Posterior cingulate gyrus (tissue), 11 donors: ENCODE measurements at regions of chr6 and their contacts with region 1.

Region 1: DNA sequence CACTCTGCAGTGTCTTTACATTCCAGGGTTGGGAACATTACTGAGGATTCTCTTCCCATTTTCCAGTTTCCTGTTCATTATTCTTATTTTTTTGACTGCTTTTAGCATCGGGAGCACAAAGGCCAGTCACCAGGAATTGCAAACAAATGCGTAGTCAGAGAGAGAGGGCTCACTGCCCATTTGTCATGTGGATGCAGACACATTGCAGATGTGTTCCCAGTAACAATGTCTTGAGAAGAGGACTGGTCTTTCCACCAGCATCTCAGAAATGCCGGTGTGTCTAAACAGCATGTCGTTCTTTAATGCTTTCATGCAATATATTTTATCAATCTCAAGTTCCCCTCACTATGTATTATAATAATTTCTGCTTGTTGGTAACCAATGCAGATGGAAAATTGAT is 952 bp upstream of the TAAR6 start:
- DNase-seq: peak in 7 of 10 donors; percentile 15 to 86 (median 54)

Region 2: GRCh38 chr6:131213501-131213990 is 1355.6 kb before region 1 on chr6:
- intact Hi-C with region 1: no loop called
- DNase-seq: no peak

Region 3: GRCh38 chr6:132286026-132287019 is 282.8 kb before region 1 on chr6:
- intact Hi-C with region 1: no loop called
- DNase-seq: no peak

Region 4: DNA sequence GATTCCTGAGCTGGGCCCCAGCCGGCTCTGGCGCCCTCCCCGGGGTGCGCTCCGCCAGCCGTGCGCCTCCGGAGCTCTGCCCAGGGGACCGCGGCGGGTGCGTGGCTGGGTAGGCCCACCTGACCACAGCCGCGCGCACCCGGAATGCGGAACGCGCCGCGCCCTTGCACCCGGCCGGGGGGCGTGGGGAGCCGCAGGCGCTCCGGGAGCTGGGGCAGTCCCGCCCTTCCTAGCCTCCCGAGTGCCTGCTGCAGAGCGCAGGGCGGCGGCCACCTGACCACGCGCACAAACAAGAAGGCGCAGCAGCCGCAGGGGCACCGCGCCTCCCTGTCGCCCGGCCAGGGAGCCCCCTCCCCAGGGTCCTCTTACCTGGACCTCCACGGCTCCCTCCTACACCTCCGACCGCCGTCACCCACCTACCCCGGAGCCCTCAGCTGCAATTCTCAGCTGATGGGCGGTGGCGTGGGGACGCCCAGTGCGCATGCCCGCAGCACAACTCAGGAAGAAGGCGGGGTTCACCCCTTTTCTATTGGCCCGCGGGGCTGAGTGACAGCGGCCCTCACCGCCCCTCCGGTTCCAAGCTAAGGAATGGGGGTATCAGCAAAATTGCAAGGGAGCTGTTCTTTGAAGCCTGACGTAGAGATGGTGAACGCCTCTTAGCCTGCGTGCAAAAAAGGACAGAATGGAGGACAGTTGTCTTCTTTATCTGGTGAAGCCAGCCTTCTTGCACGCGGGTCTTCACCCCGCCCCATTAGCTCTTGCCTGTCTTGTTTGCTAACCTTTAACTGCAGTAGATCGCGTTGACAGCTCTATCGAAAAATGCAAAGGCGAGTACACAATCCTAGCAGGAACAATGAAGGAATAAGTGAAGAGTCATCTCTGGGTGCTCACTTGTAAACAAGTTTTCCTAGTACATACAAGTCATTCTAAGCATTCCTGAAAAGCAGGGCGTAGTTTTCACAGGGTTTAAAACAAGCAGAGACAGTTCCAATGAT is 56.2 kb before region 1 on chr6 and contains the start of gene STX7:
- intact Hi-C with region 1: loop called (anchors 10 kb)
- DNase-seq: peak; percentile 90 to 99 (median 94)

Region 5: GRCh38 chr6:132607544-132608233 is 38.5 kb after region 1 on chr6:
- intact Hi-C with region 1: no loop called
- DNase-seq: no peak

Region 6: GRCh38 chr6:132633362-132633761 is 64.2 kb after region 1 on chr6:
- intact Hi-C with region 1: no loop called
- DNase-seq: no peak